Heart right ventricle (tissue), 16 donors: ENCODE measurements at regions of chr5 and their contacts with region 1.

Region 1: GRCh38 chr5:123671042-123671441 is 159.1 kb downstream of the CSNK1G3 start:
- DNase-seq: peak in 1 of 2 donors; percentile 57
- ATAC-seq: peak in 3 of 8 donors; percentile 39 to 46 (median 42)
- H3K4me3 ChIP-seq: no peak overlapping the region
- H3K27ac ChIP-seq: no peak overlapping the region
- H3K4me1 ChIP-seq: peaks cover 0 to 26% (median 15%) of the 10 kb centered on the region in 9 donors
- H3K27me3 ChIP-seq: no peaks in the 10 kb centered on the region
- CTCF ChIP-seq: peak; percentile 76 to 91 (median 84)

Region 2: GRCh38 chr5:123594434-123594833 is 76.6 kb before region 1 on chr5:
- intact Hi-C with region 1: no loop called
- DNase-seq: no peak
- ATAC-seq: peak in 4 of 8 donors; percentile 24 to 84 (median 62)
- H3K4me3 ChIP-seq: no peak overlapping the region
- H3K27ac ChIP-seq: no peak overlapping the region
- H3K4me1 ChIP-seq: peaks cover 0 to 4% (median 0%) of the 10 kb centered on the region in 9 donors
- H3K27me3 ChIP-seq: no peaks in the 10 kb centered on the region
- CTCF ChIP-seq: no peak

Region 3: GRCh38 chr5:123813937-123814624 is 143.0 kb after region 1 on chr5:
- intact Hi-C with region 1: loop called in 2 of 10 experiments (anchors 5 kb)
- DNase-seq: no peak
- ATAC-seq: peak; percentile 32 to 78 (median 73)
- H3K4me3 ChIP-seq: peak overlapping the region in 3 of 10 donors; percentile 0 to 20 (median 7)
- H3K27ac ChIP-seq: peak overlapping the region in 9 of 10 donors; percentile 6 to 76 (median 57)
- H3K4me1 ChIP-seq: peaks cover 6 to 54% (median 35%) of the 10 kb centered on the region in 9 donors
- H3K27me3 ChIP-seq: no peaks in the 10 kb centered on the region
- CTCF ChIP-seq: no peak

Region 4: GRCh38 chr5:124176691-124177090 is 505.6 kb after region 1 on chr5:
- intact Hi-C with region 1: loop called in 1 of 10 experiments (anchors 10 kb)
- DNase-seq: peak in 1 of 2 donors; percentile 36
- ATAC-seq: peak; percentile 68 to 98 (median 85)
- H3K4me3 ChIP-seq: no peak overlapping the region
- H3K27ac ChIP-seq: no peak overlapping the region
- H3K4me1 ChIP-seq: peaks cover 0 to 6% (median 0%) of the 10 kb centered on the region in 9 donors
- H3K27me3 ChIP-seq: no peaks in the 10 kb centered on the region
- CTCF ChIP-seq: peak in 5 of 9 donors; percentile 23 to 46 (median 44)

Region 5: DNA sequence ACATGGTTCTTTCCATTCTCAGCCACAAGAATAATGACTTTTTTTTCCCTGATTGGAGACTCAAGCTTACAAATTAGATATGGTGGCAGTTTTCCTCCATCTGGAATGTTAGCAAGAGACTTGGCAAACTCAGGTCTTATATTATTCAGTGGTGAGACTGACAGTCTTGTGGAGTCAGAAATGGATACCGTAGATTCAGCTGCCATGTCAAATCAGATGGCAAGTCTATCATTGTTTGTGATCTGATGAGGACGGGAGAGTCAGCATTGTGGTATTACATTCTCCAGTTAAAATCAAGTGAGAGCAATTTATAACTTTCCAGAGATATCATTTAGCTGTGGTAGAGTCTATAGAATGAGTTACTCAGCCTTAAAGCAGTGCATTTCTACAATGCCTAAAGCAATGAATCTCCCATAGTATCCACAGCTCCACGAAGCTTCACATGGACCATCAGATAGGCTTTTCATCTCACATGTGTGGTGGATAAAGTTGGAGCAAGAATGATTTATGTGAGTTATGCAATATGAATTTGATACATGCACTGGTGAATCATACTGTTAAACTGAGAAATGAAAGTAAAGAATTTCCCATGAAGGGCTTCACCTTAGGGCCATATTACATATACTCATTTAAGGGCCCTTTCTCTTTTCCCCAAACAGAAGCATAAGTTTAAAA is 644.8 kb after region 1 on chr5:
- intact Hi-C with region 1: no loop called
- DNase-seq: no peak
- ATAC-seq: no peak
- H3K4me3 ChIP-seq: no peak overlapping the region
- H3K27ac ChIP-seq: no peak overlapping the region
- H3K4me1 ChIP-seq: peaks cover 0 to 2% (median 0%) of the 10 kb centered on the region in 9 donors
- H3K27me3 ChIP-seq: no peaks in the 10 kb centered on the region
- CTCF ChIP-seq: no peak

Region 6: DNA sequence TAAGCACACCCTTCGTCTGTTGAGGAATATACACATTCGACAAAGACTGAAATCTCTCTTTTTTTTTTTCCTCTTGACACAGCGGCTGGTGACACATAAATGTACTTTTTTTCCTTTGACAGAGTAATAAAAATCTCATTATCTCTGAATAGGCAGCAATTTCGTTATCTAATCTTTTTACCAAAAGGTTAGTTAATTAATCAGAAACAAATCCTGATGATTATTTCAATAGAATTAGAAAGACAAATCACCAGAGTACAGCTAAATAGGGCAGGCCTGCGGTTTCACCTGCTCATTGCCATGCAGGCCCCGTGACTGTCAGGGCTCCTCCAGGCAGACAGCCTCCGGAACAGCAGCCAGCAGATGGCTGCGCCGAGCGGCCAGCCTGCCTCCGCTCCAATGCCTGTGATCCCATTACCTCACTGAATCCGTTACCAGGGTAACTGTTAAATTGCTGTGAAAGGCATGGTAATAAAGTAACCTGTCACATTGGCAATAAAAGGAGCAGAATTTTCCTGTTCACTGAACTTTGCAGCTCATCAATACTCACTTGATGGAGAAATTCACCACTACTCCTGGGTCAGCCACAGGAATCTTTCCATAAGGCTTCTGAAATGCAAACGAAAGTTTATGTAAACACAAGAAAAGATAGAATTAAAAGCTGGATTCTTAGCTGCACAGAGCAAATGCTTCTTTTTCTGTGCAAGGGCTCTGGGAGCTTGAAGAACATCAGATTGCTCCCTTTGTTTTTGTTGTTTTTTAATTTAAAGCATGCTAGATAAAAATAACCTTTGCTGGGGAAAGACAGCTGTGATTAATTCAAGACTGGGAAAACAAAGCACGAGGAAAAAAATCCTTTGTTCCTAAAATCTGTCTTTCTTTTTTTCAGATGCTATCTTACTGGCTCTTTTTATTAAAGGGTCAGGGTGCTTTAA is 1741.8 kb after region 1 on chr5:
- intact Hi-C with region 1: loop called in 1 of 10 experiments (anchors 5 kb)
- DNase-seq: peak; percentile 53 to 58
- ATAC-seq: peak; percentile 77 to 92 (median 87)
- H3K4me3 ChIP-seq: peak overlapping the region in 5 of 10 donors; percentile 18 to 34 (median 28)
- H3K27ac ChIP-seq: peak overlapping the region in 5 of 10 donors; percentile 32 to 74 (median 50)
- H3K4me1 ChIP-seq: peaks cover 0 to 51% (median 37%) of the 10 kb centered on the region in 9 donors
- H3K27me3 ChIP-seq: no peaks in the 10 kb centered on the region
- CTCF ChIP-seq: peak in 7 of 9 donors; percentile 25 to 64 (median 44)